GM12878 (cell line): ENCODE measurements at regions of chr3 and their contacts with region 1.

Region 1: GRCh38 chr3:172138795-172139441 is 99.5 kb downstream of the FNDC3B start:
- DNase-seq: peak; percentile 89
- ATAC-seq: peak; percentile 51
- H3K4me3 ChIP-seq: no peak overlapping the region
- H3K27ac ChIP-seq: peak overlapping the region; percentile 80
- H3K4me1 ChIP-seq: peaks cover 73% of the 10 kb centered on the region
- H3K27me3 ChIP-seq: no peaks in the 10 kb centered on the region
- CTCF ChIP-seq: no peak
- EP300 ChIP-seq: peak; percentile 39 to 60; a peak in 2 of 4 replicates
- POLR2A ChIP-seq: no peak
- RAD21 ChIP-seq: peak; percentile 23; the same call in 1 of the 2 replicates

Region 2: DNA sequence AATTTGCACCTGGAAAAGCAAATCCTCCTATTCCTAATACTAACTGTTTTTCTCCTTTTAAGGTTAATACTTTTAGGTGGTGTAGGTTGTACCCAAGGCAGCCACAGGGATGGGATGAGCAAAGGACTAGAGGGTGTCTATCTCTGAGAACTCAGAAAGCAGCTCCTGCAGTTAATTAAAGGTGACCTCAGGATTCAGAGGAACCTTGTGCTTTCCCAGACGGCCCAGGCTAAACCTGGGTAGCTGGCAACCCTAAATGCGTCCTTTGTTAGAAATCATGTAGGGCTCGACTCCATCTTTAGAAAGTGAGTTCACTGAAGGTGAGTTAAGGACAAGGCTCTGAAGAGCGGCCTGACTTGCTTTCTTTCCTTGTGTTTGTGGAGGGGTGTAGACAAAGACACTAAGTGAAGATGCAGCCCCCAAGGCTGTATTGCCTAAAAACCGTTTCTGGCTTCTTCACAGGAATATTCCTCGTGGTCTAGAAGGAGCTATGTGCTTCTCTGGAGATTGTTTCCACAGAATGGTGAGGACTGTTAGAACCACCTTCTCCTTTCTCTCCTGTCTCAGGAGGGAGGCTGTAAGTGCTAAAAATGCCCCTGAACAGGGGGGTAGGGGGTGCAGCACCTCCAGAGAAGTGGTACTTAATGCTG is 84.7 kb before region 1 on chr3:
- CTCF ChIA-PET with region 1: no interaction called
- POLR2A ChIA-PET with region 1: interaction called, 3 read pairs
- RAD21 ChIA-PET with region 1: interaction called, 5 read pairs
- SMC1A ChIA-PET with region 1: interaction called, 11 read pairs
- in situ Hi-C with region 1: no loop called
- intact Hi-C with region 1: no loop called
- DNase-seq: no peak
- ATAC-seq: peak; percentile 29
- H3K4me3 ChIP-seq: no peak overlapping the region
- H3K27ac ChIP-seq: no peak overlapping the region
- H3K4me1 ChIP-seq: peaks cover 12% of the 10 kb centered on the region
- H3K27me3 ChIP-seq: no peaks in the 10 kb centered on the region
- CTCF ChIP-seq: no peak
- EP300 ChIP-seq: no peak
- POLR2A ChIP-seq: no peak
- RAD21 ChIP-seq: no peak

Region 3: DNA sequence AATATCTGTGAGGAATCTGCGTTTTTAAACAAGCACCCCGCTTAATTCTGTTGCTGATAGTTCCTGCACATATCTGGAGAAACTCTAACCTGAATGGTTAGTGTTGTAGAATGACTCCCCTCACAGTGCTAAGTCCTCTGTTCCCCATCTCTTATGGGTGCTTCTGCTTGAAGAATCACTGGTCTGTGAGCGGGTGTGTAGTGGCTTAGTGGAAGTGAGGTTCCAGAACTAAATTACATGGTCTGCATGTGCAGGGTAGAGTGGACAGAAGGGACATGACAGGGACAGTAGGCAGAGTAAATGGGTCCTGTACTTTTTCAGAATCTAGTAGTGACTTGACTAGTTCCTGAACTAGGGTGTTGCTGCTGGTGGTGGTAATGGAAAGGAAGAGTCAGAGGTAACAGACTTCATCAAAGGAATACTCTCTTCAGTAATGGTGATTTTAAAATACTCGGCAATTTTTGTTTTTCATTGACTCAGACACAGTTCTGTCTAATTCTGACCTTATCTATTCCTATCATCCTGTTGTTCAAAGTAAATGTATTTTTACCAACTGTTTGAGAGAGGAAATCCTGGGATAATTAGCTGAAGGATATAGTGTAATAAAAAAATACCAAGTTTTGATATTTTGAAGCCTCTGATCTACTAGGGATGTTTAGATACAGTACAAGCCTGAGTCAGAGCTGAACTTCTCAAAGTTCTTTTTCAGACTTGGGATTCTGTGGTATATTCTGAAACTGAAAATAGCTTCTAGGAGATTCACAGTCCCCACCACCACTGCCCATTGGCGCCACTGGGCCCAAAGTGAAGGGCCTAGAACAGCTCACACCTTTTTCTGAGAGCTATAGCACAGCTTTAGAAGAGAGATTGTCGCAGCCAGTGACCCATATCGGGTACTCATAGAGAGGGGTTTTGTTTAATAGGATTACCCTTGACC is 44.0 kb before region 1 on chr3:
- CTCF ChIA-PET with region 1: interaction called, 3 read pairs
- POLR2A ChIA-PET with region 1: interaction called, 3 read pairs
- RAD21 ChIA-PET with region 1: interaction called, 57 read pairs
- SMC1A ChIA-PET with region 1: interaction called, 71 read pairs
- in situ Hi-C with region 1: no loop called
- intact Hi-C with region 1: no loop called
- DNase-seq: peak; percentile 62
- ATAC-seq: peak; percentile 96
- H3K4me3 ChIP-seq: no peak overlapping the region
- H3K27ac ChIP-seq: peak overlapping the region; percentile 54
- H3K4me1 ChIP-seq: peaks cover 35% of the 10 kb centered on the region
- H3K27me3 ChIP-seq: no peaks in the 10 kb centered on the region
- CTCF ChIP-seq: peak; percentile 8 to 31 (median 29); a peak in 4 of 6 replicates
- EP300 ChIP-seq: no peak; a peak in 1 of 4 replicates
- POLR2A ChIP-seq: no peak
- RAD21 ChIP-seq: peak; percentile 44

Region 4: DNA sequence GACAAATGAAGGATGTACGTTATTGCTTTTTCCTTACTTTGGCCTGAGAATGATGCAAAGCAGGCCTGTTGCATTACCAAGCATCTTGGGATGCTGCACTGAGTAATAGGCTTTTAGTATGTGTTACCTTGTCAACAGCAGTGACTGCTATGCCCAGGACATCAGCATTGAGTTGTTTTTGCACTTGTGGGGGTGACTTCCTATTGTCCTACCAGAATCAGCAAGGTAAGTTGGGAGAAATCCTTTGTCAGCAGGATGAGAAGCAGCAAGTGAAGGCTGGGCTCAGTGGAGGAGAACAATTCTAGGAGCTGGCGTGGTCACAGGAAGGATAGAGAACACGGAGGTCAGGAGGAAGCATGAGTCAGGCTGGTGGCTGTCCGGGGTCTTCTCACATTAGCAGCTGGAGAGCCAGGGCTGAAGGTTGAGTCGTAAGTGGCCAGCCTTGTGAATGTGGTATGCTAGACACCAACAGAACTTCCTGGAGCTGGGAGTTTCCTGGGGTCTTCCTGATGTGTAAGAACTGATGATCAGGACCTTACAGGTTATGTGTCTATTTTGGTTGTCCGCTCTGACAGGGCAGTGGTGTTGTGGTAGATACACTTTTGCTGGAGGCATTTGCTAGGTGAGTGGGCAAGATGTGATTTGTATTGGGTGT is 43.1 kb after region 1 on chr3:
- CTCF ChIA-PET with region 1: interaction called, 7 read pairs
- POLR2A ChIA-PET with region 1: interaction called, 17 read pairs
- RAD21 ChIA-PET with region 1: interaction called, 124 read pairs
- SMC1A ChIA-PET with region 1: interaction called, 441 read pairs
- in situ Hi-C with region 1: no loop called
- intact Hi-C with region 1: loop called (anchors 5 kb)
- DNase-seq: no peak
- ATAC-seq: peak; percentile 50
- H3K4me3 ChIP-seq: no peak overlapping the region
- H3K27ac ChIP-seq: peak overlapping the region; percentile 9
- H3K4me1 ChIP-seq: peaks cover 41% of the 10 kb centered on the region
- H3K27me3 ChIP-seq: no peaks in the 10 kb centered on the region
- CTCF ChIP-seq: no peak
- EP300 ChIP-seq: no peak
- POLR2A ChIP-seq: no peak
- RAD21 ChIP-seq: no peak

Region 5: DNA sequence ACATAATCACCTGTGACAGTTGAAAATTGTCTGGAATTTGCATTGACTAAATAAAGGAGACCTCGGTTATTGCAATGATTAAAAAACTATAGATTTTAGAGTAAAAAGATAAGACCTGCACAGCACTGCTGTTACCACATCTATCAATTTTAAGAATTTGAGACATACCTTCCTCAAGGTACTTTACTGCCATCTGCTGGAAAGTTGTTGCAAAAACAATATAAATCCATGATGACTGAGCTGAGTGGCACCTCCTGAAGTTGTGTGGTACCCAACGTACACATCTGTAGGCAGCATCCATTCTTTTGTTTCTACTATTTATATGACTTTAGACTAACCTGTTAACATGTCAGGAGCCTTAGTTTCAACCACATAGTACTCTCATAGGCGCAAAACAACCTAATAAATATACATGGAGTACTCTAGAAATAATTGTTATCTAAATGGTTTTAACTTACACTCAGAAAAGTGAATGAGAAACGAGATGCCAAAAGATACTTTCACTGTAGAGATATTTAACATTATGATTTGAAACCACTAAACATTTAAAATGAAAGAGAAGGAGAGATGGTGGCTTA is 202.7 kb after region 1 on chr3:
- CTCF ChIA-PET with region 1: interaction called, 3 read pairs
- POLR2A ChIA-PET with region 1: no interaction called
- RAD21 ChIA-PET with region 1: interaction called, 10 read pairs
- SMC1A ChIA-PET with region 1: no interaction called
- in situ Hi-C with region 1: no loop called
- intact Hi-C with region 1: no loop called
- DNase-seq: peak; percentile 24
- ATAC-seq: peak; percentile 92
- H3K4me3 ChIP-seq: no peak overlapping the region
- H3K27ac ChIP-seq: no peak overlapping the region
- H3K4me1 ChIP-seq: no peaks in the 10 kb centered on the region
- H3K27me3 ChIP-seq: no peaks in the 10 kb centered on the region
- CTCF ChIP-seq: peak; percentile 53 to 67 (median 59); a peak in 5 of 6 replicates
- EP300 ChIP-seq: no peak
- POLR2A ChIP-seq: no peak
- RAD21 ChIP-seq: peak; percentile 73